Activated CD4-positive, alpha-beta T cell treated with anti-CD3 and anti-CD28 coated beads for 36 hours (primary cell): ENCODE measurements at regions of chr14 and their contacts with region 1.

Region 1: GRCh38 chr14:105761840-105762239 is 235.5 kb downstream of the TMEM121 start:
- DNase-seq: no peak
- ATAC-seq: no peak
- H3K4me3 Mint-ChIP-seq: no peak overlapping the region
- H3K27ac Mint-ChIP-seq: no peak overlapping the region
- H3K4me1 Mint-ChIP-seq: no peaks in the 10 kb centered on the region
- H3K27me3 Mint-ChIP-seq: peaks cover 4% of the 10 kb centered on the region

Region 2: GRCh38 chr14:105617201-105617777 is 144.6 kb before region 1 on chr14:
- CTCF ChIA-PET with region 1: no interaction called
- POLR2A ChIA-PET with region 1: no interaction called
- intact Hi-C with region 1: loop called in 1 of 2 experiments (anchors 2 kb)
- DNase-seq: peak; percentile 35
- ATAC-seq: peak; percentile 16
- H3K4me3 Mint-ChIP-seq: no peak overlapping the region
- H3K27ac Mint-ChIP-seq: no peak overlapping the region
- H3K4me1 Mint-ChIP-seq: no peaks in the 10 kb centered on the region
- H3K27me3 Mint-ChIP-seq: peaks cover 8% of the 10 kb centered on the region

Region 3: GRCh38 chr14:105732748-105733622 is 28.9 kb before region 1 on chr14:
- CTCF ChIA-PET with region 1: no interaction called
- POLR2A ChIA-PET with region 1: no interaction called
- intact Hi-C with region 1: loop called (anchors 5 kb)
- DNase-seq: no peak
- ATAC-seq: no peak
- H3K4me3 Mint-ChIP-seq: no peak overlapping the region
- H3K27ac Mint-ChIP-seq: no peak overlapping the region
- H3K4me1 Mint-ChIP-seq: no peaks in the 10 kb centered on the region
- H3K27me3 Mint-ChIP-seq: peaks cover 9% of the 10 kb centered on the region

Region 4: GRCh38 chr14:105738261-105739037 is 23.4 kb before region 1 on chr14:
- CTCF ChIA-PET with region 1: no interaction called
- POLR2A ChIA-PET with region 1: no interaction called
- intact Hi-C with region 1: loop called (anchors 2 kb)
- DNase-seq: no peak
- ATAC-seq: no peak
- H3K4me3 Mint-ChIP-seq: no peak overlapping the region
- H3K27ac Mint-ChIP-seq: no peak overlapping the region
- H3K4me1 Mint-ChIP-seq: no peaks in the 10 kb centered on the region
- H3K27me3 Mint-ChIP-seq: no peaks in the 10 kb centered on the region